Esophagus muscularis mucosa (tissue), 4 donors: ENCODE measurements at regions of chr19 and their contacts with region 1.

Region 1: GRCh38 chr19:6021878-6022569 is 44.1 kb upstream of the RANBP3 start:
- DNase-seq: peak; percentile 94
- H3K4me3 ChIP-seq: no peak overlapping the region
- H3K27ac ChIP-seq: peak overlapping the region; percentile 58 to 72 (median 68)
- H3K4me1 ChIP-seq: peaks cover 4 to 31% (median 21%) of the 10 kb centered on the region in 4 donors
- H3K27me3 ChIP-seq: no peaks in the 10 kb centered on the region
- CTCF ChIP-seq: peak; percentile 69 to 73 (median 70)
- EP300 ChIP-seq: no peak
- POLR2A ChIP-seq: no peak

Region 2: DNA sequence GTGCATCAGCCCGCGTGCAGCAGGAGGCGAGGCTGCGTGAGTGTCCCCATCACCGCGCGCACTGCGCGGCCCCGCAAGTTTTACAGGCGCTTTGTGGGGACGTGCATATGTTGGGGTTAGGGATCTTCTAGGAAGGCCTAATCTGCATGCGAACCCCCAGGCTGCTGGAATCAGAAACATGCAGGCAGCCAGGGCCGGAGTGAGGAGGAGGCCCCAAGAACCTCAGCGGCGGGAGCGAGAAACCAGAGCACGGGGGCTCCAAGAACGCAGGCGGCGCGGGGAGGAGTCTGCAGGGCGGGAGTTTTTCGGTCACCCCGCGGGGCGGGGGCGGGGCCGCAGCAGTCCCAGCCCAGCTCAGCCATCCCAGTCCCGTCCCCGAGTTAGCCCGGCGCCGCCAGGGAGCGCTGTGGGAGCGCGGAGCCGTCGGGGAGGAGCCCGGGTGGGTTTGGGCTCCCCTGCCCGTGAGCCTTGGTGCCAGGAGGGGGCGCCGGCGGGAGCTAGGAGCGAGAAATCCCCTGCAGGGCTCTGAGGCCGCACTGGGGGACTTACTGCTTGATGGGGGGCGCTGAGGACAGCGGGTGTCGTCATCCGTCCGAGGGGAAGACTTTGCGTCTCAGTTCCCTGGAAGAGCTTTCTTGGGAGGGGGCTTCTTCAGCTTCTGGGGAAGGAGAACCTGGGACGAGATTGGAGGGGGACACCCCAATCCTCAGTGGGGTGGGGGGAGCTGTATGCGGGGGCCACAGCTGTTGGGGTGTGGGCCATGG is 218.1 kb before region 1 on chr19:
- intact Hi-C with region 1: loop called (anchors 10 kb)
- DNase-seq: peak; percentile 95
- H3K4me3 ChIP-seq: peak overlapping the region; percentile 65 to 78 (median 72)
- H3K27ac ChIP-seq: peak overlapping the region; percentile 74 to 92 (median 89)
- H3K4me1 ChIP-seq: peaks cover 17 to 38% (median 30%) of the 10 kb centered on the region in 4 donors
- H3K27me3 ChIP-seq: peaks cover 0 to 61% (median 5%) of the 10 kb centered on the region in 4 donors
- CTCF ChIP-seq: peak; percentile 95 to 98 (median 98)
- EP300 ChIP-seq: no peak
- POLR2A ChIP-seq: no peak